Common myeloid progenitor, CD34-positive (primary cell): ENCODE measurements at regions of chr17 and their contacts with region 1.

Region 1: DNA sequence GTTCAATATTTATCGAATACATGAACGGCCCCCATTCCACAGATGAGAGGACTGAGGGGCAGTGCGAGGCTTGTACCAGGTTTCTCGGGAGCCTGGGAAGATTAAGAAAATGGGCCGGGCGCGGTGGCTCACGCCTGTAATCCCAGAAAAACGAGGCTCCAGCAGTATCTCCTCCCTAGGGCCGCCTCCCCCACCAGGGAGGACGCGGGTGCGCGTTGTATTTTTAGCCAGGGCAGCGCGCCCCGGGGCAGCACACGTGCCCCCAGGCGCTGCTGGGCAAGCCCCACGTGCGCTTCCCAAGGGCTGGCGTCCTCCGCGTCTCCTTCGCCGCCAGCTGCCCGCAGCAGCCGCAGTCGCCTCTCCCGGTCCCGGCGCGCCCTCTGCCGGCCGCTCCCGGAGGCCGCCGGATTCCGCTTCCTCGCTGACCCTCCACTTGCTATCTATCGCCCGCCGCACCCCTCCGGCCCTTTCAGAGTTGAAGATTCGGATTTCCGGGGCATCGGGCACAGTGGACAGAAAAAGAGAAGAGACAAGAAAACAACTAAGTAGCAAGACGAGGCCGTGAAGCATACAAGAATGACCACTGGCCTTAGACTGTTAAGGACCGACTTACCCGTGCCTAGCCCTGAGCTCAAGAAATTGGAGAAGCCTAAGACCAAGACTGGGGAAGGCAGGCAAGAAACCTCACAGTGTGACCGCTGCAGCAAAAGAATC is 1.9 kb upstream of the YBX2 start:
- DNase-seq: peak; percentile 62 to 65 (median 64)
- H3K4me3 ChIP-seq: peak overlapping the region in 2 of 7 experiments; percentile 13 to 20
- H3K27ac ChIP-seq: no peak overlapping the region
- H3K4me1 ChIP-seq: peaks cover 0 to 26% (median 24%) of the 10 kb centered on the region in 4 experiments
- H3K27me3 ChIP-seq: peaks cover 0 to 43% (median 14%) of the 10 kb centered on the region in 5 experiments

Region 2: GRCh38 chr17:7147772-7148171 is 148.6 kb before region 1 on chr17:
- CTCF ChIA-PET with region 1: no interaction called
- POLR2A ChIA-PET with region 1: no interaction called
- DNase-seq: no peak
- H3K4me3 ChIP-seq: no peak overlapping the region
- H3K27ac ChIP-seq: no peak overlapping the region
- H3K4me1 ChIP-seq: no peaks in the 10 kb centered on the region
- H3K27me3 ChIP-seq: no peaks in the 10 kb centered on the region

Region 3: DNA sequence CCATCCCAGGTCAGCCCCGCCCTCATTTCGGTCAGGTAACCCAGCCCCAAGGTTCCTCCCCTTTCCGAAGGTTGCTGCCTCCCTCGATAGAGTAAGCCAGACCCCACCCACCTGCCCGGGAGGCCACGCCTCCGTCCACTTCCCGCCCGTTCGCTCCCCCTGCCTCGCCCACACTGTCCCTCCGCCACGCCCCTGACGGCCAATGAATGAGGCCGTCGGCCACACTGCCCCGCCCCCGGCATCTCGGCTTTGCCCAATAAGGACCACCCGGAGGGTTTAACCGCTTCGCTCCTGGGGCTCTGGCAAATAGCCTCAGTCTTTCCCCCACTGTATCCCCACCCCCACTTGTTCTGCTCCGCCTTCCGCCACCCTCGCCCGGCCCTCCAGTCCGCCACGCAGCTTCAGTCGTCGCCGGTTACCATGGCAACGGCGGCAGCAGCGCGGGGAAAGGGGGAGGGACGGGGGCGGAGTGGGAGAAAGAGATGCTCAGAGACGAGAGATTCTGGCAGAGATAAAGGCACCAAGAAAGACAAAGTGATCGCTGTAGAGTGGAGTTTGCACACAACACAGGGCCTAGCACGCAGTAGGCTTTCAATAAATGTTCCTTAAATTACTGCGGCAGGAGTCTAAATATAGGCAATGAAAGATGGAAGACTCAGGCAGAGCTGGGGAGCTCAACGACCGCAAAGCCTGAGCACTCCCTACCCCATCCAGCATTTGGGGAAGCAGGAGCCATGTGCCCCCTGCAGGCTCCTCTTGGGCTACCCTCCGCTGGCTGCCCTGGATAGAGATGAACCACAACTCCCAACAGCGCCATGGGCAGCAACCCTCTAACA is 81.8 kb before region 1 on chr17:
- CTCF ChIA-PET with region 1: interaction called, 39 read pairs
- POLR2A ChIA-PET with region 1: no interaction called
- DNase-seq: peak; percentile 97 to 99 (median 99)
- H3K4me3 ChIP-seq: peak overlapping the region; percentile 40 to 82 (median 67)
- H3K27ac ChIP-seq: peak overlapping the region; percentile 87 to 94
- H3K4me1 ChIP-seq: peaks cover 8 to 59% (median 52%) of the 10 kb centered on the region in 4 experiments
- H3K27me3 ChIP-seq: no peaks in the 10 kb centered on the region

Region 4: GRCh38 chr17:7219812-7220581 is 76.3 kb before region 1 on chr17 and contains the starts of genes ACADVL and DLG4:
- CTCF ChIA-PET with region 1: interaction called, 39 read pairs
- POLR2A ChIA-PET with region 1: interaction called, 3 read pairs
- DNase-seq: peak; percentile 79 to 87 (median 81)
- H3K4me3 ChIP-seq: peak within 1 kb of the TSS; percentile 79 to 94 (median 87)
- H3K27ac ChIP-seq: peak within 1 kb of the TSS; percentile 58 to 76
- H3K4me1 ChIP-seq: peaks cover 5 to 58% (median 56%) of the 10 kb centered on the region in 4 experiments
- H3K27me3 ChIP-seq: no peaks in the 10 kb centered on the region

Region 5: DNA sequence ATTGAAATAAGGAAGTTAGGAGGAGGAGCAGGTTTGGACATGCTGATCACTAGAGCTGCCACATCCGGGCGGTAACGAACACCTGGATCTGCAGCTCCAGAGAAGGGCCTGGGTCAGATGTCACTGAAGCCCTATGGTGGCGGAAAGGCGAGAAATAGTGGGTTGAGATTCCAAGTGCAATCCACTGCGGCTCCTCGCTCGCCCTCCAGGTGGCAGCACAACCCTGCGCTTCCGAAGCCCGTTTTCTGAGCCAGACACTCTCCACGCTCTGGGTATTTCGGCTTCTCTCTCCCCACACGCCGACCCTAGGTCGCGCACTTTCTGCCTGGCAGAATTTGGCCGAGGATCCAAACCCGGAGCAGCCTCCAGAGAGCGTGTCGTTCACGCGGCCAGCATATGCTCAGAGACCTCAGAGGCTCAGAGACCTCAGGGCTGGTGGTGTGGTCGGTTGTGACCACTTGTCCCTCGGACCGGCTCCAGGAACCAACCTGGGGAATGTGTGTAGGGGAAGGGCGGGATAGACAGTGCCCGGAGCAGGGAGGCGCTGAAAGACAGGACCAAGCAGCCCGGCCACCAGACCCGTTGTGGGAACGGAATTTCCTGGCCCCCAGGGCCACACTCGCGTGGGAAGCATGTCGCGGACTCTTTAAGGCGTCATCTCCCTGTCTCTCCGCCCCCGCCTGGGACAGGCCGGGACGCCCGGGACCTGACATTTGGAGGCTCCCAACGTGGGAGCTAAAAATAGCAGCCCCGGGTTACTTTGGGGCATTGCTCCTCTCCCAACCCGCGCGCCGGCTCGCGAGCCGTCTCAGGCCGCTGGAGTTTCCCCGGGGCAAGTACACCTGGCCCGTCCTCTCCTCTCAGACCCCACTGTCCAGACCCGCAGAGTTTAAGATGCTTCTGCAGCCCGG is 15.6 kb before region 1 on chr17:
- CTCF ChIA-PET with region 1: interaction called, 65 read pairs
- POLR2A ChIA-PET with region 1: interaction called, 5 read pairs
- DNase-seq: peak; percentile 88 to 93 (median 93)
- H3K4me3 ChIP-seq: peak overlapping the region in 6 of 7 experiments; percentile 36 to 73 (median 62)
- H3K27ac ChIP-seq: no peak overlapping the region
- H3K4me1 ChIP-seq: peaks cover 0 to 35% (median 33%) of the 10 kb centered on the region in 4 experiments
- H3K27me3 ChIP-seq: peaks cover 0 to 2% (median 0%) of the 10 kb centered on the region in 5 experiments

Region 6: GRCh38 chr17:7306911-7307686 is 10.8 kb after region 1 on chr17 and contains the start of gene EIF5A:
- CTCF ChIA-PET with region 1: interaction called, 17 read pairs
- POLR2A ChIA-PET with region 1: interaction called, 3 read pairs
- DNase-seq: peak; percentile 100
- H3K4me3 ChIP-seq: peak within 1 kb of the TSS; percentile 67 to 99 (median 87)
- H3K27ac ChIP-seq: peak within 1 kb of the TSS; percentile 85 to 96
- H3K4me1 ChIP-seq: peaks cover 9 to 27% (median 20%) of the 10 kb centered on the region in 4 experiments
- H3K27me3 ChIP-seq: no peaks in the 10 kb centered on the region